AG04449 (cell line): ENCODE measurements at regions of chr12 and their contacts with region 1.

Region 1: GRCh38 chr12:52884526-52885293 is 20.2 kb downstream of the KRT8 start:
- DNase-seq: no peak
- H3K4me3 ChIP-seq: no peak overlapping the region
- CTCF ChIP-seq: peak; percentile 92

Region 2: GRCh38 chr12:52023182-52023975 is 861.3 kb before region 1 on chr12:
- CTCF ChIA-PET with region 1: interaction called, 27 read pairs
- POLR2A ChIA-PET with region 1: no interaction called
- DNase-seq: no peak
- H3K4me3 ChIP-seq: peak overlapping the region; percentile 59
- CTCF ChIP-seq: peak; percentile 98

Region 3: DNA sequence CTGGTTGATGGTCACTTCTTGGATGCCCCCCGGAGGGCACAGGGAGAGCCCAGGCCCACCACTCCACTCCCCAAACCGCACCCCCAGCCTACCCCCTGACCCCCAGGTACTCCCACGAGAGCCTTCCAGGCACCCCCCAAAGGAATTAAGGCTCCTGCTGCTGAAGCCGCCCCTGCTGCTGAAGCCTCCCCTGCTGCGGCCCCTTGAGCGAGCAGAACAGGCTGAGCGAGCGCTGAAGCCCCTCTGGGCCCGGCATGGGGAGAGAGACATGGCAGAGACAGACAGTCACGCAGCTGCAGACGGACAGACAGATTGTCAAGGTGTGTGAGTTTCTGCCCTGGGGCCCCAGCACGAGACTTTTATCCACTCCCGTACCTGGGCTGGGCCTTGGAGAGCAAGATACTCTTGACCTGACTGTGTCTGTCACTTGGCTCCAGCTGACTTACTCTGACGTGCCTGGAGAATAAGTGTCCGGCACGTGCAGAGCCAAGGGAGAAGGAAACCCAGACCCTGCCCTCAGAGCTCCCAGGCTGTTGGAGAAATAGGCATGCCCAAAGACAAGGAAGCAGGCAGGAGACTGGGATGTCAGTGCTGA is 36.0 kb before region 1 on chr12 and contains the start of gene KRT78:
- CTCF ChIA-PET with region 1: no interaction called
- POLR2A ChIA-PET with region 1: no interaction called
- DNase-seq: no peak
- H3K4me3 ChIP-seq: no peak within 1 kb of the TSS
- CTCF ChIP-seq: no peak

Region 4: DNA sequence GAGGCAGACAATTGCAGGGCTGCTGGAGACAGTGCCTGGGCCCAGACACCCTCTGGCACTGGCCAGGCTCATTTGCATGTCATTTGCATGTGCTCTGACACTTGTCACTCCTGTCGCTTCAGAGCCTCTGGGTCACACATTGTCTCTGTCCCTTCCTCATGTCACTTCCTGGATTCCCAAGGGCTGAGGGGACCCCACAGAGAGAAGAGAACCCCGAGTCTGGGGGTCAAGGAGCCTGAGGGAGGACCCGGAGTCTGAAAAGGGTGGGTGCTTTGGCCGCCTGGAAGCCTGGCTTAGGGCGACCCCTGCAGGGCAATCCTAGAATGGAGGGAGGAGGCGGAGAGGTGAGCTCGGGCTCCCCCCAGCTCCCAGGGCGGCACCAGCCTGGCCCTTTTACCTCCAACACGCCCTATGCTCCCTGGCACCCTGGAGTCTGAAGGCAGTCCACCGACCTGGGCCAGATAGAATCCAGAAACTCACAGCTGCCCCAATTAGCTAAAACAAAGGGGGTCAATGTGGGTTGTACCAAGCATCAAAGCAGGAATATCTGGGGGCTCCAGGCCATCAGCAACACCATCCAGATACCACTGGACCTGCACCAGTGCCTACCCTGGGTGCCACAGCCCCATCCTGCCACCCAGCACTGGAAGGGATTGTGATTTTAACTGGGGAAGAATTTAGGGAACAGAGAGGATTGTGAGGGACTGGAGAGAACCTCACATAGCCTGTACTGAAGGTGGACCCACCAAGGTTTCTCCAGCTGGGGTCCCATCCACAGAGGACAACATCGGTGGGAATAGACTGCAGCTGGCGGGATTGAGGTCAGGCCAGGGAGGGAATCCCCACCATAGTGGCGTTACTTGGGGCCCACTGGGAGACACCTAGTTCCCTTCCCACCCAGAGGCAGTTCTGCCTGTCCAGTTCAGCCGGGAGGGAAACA is 14.1 kb before region 1 on chr12:
- CTCF ChIA-PET with region 1: interaction called, 77 read pairs
- POLR2A ChIA-PET with region 1: no interaction called
- DNase-seq: no peak
- H3K4me3 ChIP-seq: no peak overlapping the region
- CTCF ChIP-seq: peak; percentile 86

Region 5: GRCh38 chr12:52918351-52918750 is 33.6 kb after region 1 on chr12:
- CTCF ChIA-PET with region 1: interaction called, 71 read pairs
- POLR2A ChIA-PET with region 1: no interaction called
- DNase-seq: no peak
- H3K4me3 ChIP-seq: no peak overlapping the region
- CTCF ChIP-seq: no peak

Region 6: GRCh38 chr12:52942066-52942900 is 57.6 kb after region 1 on chr12:
- CTCF ChIA-PET with region 1: interaction called, 71 read pairs
- POLR2A ChIA-PET with region 1: no interaction called
- DNase-seq: no peak
- H3K4me3 ChIP-seq: no peak overlapping the region
- CTCF ChIP-seq: no peak

Region 7: DNA sequence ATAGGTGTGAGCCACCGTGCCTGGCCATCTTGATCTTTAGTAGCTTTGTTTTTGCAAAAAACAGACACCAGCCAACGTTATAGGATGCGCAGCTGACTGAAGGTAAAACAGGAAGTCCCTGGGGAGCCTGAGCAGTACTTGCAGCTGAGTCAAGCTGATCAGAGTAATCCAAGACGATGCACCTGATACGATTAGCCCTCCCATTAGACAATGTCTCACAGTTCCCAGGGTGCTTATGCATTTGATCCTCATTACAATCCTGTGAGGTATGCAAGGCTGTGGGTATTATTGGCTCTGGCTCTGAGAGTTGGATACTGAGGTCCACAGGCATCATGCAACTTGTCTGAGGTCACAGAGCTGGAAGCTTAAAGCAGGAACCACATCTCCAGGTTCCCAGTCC is 72.3 kb after region 1 on chr12:
- CTCF ChIA-PET with region 1: interaction called, 268 read pairs
- POLR2A ChIA-PET with region 1: no interaction called
- DNase-seq: no peak
- H3K4me3 ChIP-seq: no peak overlapping the region
- CTCF ChIP-seq: no peak